HepG2 (cell line): ENCODE measurements at regions of chr22 and their contacts with region 1.

Region 1: GRCh38 chr22:19679522-19680101 is 34.7 kb upstream of the SEPTIN5 start:
- DNase-seq: no peak
- ATAC-seq: peak; percentile 94
- H3K4me3 ChIP-seq: no peak overlapping the region
- H3K27ac ChIP-seq: no peak overlapping the region
- H3K4me1 ChIP-seq: no peaks in the 10 kb centered on the region
- H3K27me3 ChIP-seq: peaks cover 0 to 15% of the 10 kb centered on the region in 2 experiments; a peak in 3 of 5 replicates
- CTCF ChIP-seq: peak; percentile 82
- EP300 ChIP-seq: no peak
- POLR2A ChIP-seq: no peak
- RAD21 ChIP-seq: peak; percentile 68

Region 2: DNA sequence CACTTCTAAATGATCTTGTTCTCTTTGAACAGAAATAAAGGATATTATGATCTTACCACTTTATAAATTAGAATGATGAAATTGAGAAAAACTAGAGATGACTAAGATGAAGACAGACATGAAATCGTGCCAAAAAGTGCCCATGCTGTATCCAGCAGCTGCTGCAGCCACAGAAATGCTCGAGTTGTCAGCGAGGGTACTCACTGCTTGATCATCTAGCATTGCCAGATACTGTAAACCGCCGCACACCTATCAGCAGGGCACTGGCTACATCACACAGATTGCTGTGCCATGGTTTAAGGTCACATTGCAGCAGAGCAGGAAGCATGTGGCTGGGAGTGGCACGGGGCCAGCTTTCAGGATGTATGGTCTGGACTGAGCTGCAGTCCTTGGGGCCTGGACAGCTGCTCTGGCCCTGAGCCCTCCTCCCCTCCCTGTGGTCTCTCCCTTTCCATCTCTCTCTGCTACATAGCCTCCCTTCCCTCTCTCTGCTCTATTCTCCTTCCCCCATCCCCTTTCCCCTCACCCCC is 16.3 kb before region 1 on chr22:
- CTCF ChIA-PET with region 1: no interaction called
- POLR2A ChIA-PET with region 1: no interaction called
- in situ Hi-C with region 1: no loop called
- intact Hi-C with region 1: no loop called
- DNase-seq: no peak
- ATAC-seq: peak; percentile 54; the same call in 2 of the 3 replicates
- H3K4me3 ChIP-seq: no peak overlapping the region
- H3K27ac ChIP-seq: no peak overlapping the region
- H3K4me1 ChIP-seq: no peaks in the 10 kb centered on the region
- H3K27me3 ChIP-seq: peaks cover 6 to 50% of the 10 kb centered on the region in 2 experiments; a peak in 4 of 5 replicates
- CTCF ChIP-seq: no peak
- EP300 ChIP-seq: no peak
- POLR2A ChIP-seq: no peak
- RAD21 ChIP-seq: no peak

Region 3: GRCh38 chr22:19717691-19718455 is 38.3 kb after region 1 on chr22:
- CTCF ChIA-PET with region 1: interaction called, 14 read pairs
- POLR2A ChIA-PET with region 1: no interaction called
- in situ Hi-C with region 1: loop called (anchors 5 kb)
- intact Hi-C with region 1: no loop called
- DNase-seq: no peak
- ATAC-seq: peak; percentile 53
- H3K4me3 ChIP-seq: peak overlapping the region; percentile 41 to 70 (median 42); a peak in 5 of 6 replicates
- H3K27ac ChIP-seq: no peak overlapping the region
- H3K4me1 ChIP-seq: peaks cover 20% of the 10 kb centered on the region
- H3K27me3 ChIP-seq: peaks cover 27 to 87% of the 10 kb centered on the region in 2 experiments
- CTCF ChIP-seq: peak; percentile 80
- EP300 ChIP-seq: no peak
- POLR2A ChIP-seq: no peak
- RAD21 ChIP-seq: peak; percentile 92

Region 4: DNA sequence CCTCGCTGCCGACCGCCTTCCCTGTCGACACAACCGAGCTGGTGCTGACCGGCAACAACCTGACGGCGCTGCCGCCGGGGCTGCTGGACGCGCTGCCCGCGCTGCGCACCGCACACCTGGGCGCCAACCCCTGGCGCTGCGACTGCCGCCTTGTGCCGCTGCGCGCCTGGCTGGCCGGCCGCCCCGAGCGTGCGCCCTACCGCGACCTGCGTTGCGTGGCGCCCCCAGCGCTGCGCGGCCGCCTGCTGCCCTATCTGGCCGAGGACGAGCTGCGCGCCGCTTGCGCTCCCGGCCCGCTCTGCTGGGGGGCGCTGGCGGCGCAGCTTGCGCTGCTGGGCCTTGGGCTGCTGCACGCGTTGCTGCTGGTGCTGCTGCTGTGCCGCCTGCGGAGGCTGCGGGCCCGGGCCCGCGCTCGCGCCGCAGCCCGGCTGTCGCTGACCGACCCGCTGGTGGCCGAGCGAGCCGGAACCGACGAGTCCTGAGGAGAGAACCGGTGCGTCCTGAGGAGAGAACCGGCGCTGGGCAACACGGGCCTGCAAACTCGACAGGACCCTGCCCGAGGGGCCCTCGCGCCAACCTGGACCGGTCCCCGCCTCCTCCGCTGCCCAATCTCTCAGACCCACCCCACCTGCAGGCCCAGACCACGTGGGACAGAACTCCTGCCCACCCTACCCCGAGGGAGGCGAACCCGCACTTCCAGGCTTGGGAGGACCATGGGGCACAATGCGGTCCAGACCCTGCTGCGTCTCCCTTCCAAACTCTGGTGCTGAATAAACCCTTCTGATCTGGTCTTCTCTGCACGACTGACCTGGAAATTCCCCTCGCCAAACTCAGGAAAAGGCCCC is 44.6 kb after region 1 on chr22:
- CTCF ChIA-PET with region 1: no interaction called
- POLR2A ChIA-PET with region 1: no interaction called
- in situ Hi-C with region 1: loop called (anchors 5 kb)
- intact Hi-C with region 1: no loop called
- DNase-seq: peak; percentile 44
- ATAC-seq: peak; percentile 73
- H3K4me3 ChIP-seq: peak overlapping the region; percentile 37 to 73 (median 41); a peak in 5 of 6 replicates
- H3K27ac ChIP-seq: no peak overlapping the region
- H3K4me1 ChIP-seq: peaks cover 40% of the 10 kb centered on the region
- H3K27me3 ChIP-seq: peaks cover 26 to 84% of the 10 kb centered on the region in 2 experiments
- CTCF ChIP-seq: peak; percentile 58; the same call in 1 of the 2 replicates
- EP300 ChIP-seq: no peak
- POLR2A ChIP-seq: no peak
- RAD21 ChIP-seq: peak; percentile 80